Naive thymus-derived CD4-positive, alpha-beta T cell (primary cell): ENCODE measurements at regions of chr15 and their contacts with region 1.

Region 1: DNA sequence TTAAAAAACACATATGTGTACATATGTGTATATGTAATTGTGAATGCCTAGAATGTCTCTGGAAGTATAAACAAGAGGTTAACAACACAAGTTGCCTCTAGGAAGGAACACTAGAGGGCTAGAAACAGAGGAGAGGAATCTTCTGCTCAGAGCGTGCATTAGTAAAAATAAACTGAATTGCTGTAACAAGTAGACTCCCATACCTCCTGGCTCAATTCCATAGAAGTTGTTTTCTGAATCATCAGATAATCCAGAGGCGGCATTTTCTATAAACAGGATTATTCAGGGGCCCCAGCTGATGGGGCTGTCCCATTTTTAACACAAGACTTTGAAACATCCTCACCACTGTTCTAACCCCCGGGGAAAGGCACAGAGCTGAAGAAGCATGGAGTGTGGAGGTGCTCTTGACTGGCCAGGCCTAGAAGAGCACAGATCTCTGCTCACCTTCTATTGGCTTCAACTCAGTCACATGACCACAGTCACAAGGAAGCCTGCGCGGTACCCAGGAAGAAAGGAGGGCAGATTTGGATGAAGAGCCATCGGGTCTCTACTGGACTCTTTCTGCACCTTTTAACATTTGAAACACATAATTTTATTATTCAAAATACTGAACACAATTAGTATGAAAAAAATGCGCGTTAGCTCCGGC is 145.7 kb downstream of the TLE3 start:
- DNase-seq: no peak
- ATAC-seq: no peak
- H3K4me3 ChIP-seq: no peak overlapping the region
- H3K4me3 Mint-ChIP-seq: no peak overlapping the region
- H3K27ac ChIP-seq: no peak overlapping the region
- H3K27ac Mint-ChIP-seq: no peak overlapping the region
- H3K4me1 ChIP-seq: no peaks in the 10 kb centered on the region
- H3K4me1 Mint-ChIP-seq: peaks cover 0 to 2% (median 0%) of the 10 kb centered on the region in 7 donors
- H3K27me3 ChIP-seq: no peaks in the 10 kb centered on the region
- H3K27me3 Mint-ChIP-seq: peaks cover 0 to 16% (median 0%) of the 10 kb centered on the region in 5 donors

Region 2: GRCh38 chr15:69861331-69862171 is 90.5 kb before region 1 on chr15:
- CTCF ChIA-PET with region 1: no interaction called
- POLR2A ChIA-PET with region 1: no interaction called
- intact Hi-C with region 1: loop called in 1 of 2 experiments (anchors 10 kb)
- DNase-seq: no peak
- ATAC-seq: no peak
- H3K4me3 ChIP-seq: no peak overlapping the region
- H3K4me3 Mint-ChIP-seq: no peak overlapping the region
- H3K27ac ChIP-seq: no peak overlapping the region
- H3K27ac Mint-ChIP-seq: no peak overlapping the region
- H3K4me1 ChIP-seq: peaks cover 0 to 17% of the 10 kb centered on the region in 2 donors
- H3K4me1 Mint-ChIP-seq: peaks cover 6 to 21% (median 16%) of the 10 kb centered on the region in 7 donors
- H3K27me3 ChIP-seq: no peaks in the 10 kb centered on the region
- H3K27me3 Mint-ChIP-seq: peaks cover 0 to 5% (median 4%) of the 10 kb centered on the region in 5 donors